ENCODE measurements at regions of chr12 and their contacts with region 1.

Region 1: GRCh38 chr12:132003846-132004245 is 54.1 kb downstream of the EP400 start:
- DNase-seq: no peak
- ATAC-seq: no peak

Region 2: DNA sequence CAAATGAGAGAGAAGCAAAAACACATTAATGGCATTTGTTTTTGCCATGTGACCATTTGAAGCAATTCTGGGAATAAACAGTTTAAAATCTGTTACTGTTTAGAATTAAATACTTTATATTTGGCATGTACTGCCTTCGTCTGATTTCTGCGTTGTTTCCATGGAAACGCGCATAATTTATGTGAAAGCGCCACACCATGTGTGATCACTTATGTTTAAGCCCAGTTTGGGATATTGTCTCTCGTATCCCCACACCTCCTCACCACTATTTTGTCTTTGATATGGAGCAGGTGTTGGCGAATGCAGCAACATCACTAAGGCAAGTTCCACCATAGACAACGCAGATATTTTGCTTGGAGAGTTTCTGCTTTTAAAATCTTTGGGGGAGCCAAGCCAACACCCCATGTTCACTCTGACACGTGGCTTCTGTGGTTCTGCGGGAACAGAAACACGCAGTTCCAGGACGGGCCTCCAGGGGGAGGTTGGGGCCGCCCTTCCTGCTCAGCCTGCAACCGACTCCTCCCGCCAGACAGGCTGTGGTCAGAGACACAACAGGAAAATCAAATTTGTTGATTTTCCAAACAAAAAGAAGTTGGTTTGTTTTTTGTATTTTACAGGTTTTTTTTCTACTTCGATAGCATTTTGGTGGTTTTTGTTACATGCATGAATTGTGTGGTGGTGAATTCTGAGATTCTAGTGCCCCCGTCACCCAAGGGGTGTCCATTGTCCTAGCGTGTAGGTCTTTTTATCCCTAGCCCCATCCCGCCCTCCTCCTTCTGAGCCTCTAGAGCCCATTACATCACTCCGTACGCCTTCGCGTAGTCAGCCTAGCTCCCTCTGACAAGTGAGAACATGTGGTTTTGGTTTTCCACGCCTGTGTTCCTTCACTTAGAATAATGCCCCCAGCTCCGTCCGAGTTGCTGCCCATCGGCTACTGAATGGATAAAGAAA is 394.8 kb before region 1 on chr12:
- intact Hi-C with region 1: loop called (anchors 5 kb)
- DNase-seq: peak; percentile 83
- ATAC-seq: peak; percentile 92

Region 3: GRCh38 chr12:131836193-131836592 is 167.7 kb before region 1 on chr12:
- intact Hi-C with region 1: loop called (anchors 5 kb)
- DNase-seq: peak; percentile 45
- ATAC-seq: no peak

Region 4: DNA sequence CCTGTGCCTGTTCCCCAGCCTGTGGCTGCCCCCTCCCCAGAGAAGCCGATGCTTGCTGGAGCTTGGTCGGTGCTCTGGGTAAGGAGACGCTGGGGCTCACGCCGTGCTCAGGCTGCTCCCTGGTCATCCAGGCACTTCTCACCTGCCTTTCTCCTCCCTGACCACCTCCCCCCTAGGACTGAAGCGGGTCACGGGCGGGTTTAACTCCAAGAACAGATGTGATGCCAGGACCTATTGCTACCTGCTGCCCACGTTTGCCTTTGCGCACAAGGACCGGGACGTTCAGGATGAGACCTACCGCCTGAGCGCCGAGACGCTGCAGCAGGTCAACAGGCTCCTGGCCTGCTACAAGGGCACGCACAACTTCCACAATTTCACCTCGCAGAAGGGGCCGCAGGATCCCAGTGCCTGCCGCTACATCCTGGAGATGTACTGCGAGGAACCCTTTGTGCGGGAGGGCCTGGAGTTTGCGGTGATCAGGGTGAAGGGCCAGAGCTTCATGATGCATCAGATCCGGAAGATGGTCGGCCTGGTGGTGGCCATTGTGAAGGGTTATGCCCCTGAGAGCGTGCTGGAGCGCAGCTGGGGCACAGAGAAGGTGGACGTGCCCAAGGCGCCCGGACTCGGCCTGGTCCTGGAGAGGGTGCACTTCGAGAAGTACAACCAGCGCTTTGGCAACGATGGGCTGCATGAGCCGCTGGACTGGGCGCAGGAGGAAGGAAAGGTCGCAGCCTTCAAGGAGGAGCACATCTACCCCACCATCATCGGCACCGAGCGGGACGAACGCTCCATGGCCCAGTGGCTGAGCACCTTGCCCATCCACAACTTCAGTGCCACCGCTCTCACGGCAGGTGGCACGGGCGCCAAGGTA is 62.5 kb before region 1 on chr12:
- intact Hi-C with region 1: no loop called
- DNase-seq: no peak
- ATAC-seq: no peak

Region 5: GRCh38 chr12:132133952-132134625 is 130.2 kb after region 1 on chr12:
- intact Hi-C with region 1: no loop called
- DNase-seq: no peak
- ATAC-seq: peak; percentile 24

Region 6: DNA sequence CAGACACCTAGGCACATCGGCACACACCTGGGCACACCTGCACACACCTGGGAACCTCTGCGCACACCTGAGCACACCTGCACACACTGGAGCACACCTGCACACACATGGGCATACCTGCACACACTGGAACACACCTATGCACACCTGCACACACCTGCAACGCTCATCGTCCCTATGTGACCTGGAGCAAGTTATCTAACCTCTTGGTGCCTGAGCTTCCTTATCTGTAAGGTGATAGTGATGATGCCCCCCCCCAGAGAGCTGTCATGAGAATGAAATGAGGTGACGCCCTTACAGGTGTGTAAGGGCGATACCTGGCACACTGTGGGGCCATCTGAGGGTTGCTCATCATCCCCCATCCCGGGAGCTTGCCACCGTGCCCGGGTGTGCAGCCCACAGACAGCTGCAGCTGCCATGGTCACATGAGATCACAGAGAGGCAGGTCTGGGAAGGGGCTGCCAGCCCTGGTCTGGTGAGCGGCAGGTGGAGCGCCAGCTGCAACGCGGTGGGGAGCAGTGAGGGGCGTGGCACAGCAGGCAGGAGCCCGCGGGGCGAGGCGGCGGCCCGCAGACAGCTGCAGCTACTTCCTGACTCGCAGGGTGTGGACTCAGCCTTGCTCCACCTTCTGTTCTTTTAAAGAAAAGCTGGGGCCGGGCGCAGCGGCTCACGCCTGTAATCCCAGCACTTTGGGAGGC is 426.2 kb after region 1 on chr12:
- intact Hi-C with region 1: no loop called
- DNase-seq: no peak
- ATAC-seq: no peak